Mucosa of descending colon (tissue), 3 donors: ENCODE measurements at regions of chr20 and their contacts with region 1.

Region 1: DNA sequence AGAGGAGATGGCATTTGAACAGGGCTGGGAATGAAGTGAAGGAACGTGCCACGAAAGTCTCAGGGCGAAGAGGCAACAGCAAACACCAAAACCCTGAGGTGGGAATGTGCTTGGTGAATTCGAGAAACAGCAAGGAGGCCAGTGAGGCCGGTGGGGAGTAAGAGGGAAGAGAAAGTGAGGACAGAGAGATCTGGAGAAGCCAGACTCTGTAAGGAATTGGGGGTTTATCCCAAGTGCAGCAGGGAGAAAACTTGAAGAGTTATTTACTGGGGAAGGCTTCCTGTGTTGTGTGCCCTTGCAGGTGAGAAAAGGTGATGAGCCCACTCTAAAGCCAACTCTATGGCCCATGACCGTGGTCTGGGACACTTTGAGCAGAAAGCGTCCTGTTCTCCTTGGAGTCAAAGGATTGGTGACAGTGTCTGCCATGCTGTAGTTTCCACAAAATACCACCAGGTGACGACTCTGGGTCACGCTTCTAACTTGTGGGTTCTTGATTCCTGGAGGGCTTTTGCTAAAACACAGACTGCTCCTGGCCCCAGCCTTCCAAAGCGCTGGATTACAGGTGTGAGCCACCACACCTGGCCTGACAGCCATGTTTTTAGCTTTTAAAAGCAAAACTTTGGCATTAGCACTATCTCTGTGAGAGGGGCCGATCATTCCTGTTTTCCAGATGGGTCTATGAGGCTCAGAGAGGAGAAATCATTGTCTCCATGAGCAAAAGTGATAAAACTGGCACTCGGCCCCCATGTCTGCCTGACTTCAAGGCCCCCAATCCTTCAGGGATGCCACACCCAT is 18.0 kb upstream of the CSNK2A1 start:
- DNase-seq: peak in 2 of 3 donors; percentile 45 to 72
- ATAC-seq: peak; percentile 82
- H3K4me3 ChIP-seq: no peak overlapping the region
- H3K4me1 ChIP-seq: no peaks in the 10 kb centered on the region
- CTCF ChIP-seq: peak; percentile 93

Region 2: DNA sequence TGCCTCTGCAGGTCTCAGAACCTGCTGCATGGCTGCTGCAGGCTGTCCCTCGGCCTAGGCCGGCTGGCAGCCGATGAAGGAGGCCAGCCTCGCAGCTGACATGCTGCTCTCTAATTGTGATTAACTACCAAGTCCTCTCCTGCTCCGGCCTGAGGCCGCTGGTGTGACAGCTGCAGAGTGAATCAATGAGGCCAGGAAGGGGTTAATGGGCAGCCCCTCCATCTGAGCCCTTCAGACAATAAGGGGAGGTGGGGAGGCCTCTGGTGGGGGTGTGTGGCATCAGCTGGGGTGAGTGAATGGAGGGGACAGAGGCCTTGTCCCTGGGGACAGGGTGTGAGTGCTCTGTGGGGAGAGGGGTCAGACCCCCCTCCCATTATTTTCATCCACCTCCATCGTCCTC is 172.2 kb after region 1 on chr20:
- intact Hi-C with region 1: loop called in 1 of 2 experiments (anchors 10 kb)
- DNase-seq: no peak
- ATAC-seq: no peak
- H3K4me3 ChIP-seq: no peak overlapping the region
- H3K4me1 ChIP-seq: no peaks in the 10 kb centered on the region
- CTCF ChIP-seq: no peak

Region 3: DNA sequence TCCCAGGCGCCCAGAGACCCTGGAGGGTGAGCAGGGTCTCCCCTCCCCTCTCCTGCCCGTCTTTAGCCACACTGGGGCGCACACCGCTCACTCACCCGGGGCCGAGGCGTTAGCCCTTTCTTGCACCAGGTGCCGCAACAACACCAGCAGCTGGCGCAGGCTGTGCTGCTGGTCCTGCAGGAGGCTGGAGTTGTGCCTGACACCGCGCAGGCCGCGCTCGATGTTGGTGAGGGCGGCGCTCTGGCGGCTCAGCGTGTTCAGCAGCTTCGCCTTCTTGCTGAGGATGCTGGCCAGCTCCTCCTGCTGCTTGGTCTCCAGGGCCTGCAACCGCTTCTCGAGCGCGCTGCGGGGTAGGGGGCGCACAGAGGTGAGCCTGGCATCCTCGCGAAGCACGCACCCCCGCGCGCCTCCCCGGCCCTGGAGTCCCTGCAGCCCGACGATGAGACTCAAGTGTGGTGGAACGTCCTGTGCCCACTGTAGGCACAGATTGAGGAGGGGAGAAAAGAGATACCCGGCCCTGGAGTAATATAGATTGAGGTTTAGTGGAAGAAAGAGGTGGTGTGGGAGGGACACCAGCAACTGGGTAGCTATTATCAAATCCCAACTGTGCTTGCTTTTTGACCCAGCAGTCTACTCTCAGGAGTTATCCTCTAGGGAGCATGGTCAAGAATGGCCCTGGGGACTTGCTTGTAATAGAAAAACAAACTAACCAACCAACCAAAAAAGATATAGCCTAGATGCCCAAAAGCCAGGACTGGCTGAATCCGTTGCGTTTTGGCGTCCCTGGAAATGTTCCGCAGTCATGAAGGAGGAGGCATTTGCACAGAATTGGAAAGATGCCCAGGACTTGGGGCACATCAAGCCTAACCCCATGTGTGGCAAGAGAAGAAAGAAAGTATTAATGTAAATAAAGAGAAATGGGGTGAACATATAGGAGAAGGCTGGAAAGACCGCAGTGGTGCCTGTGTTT is 323.6 kb after region 1 on chr20:
- intact Hi-C with region 1: no loop called
- DNase-seq: peak in 1 of 3 donors; percentile 5
- ATAC-seq: no peak
- H3K4me3 ChIP-seq: no peak overlapping the region
- H3K4me1 ChIP-seq: no peaks in the 10 kb centered on the region
- CTCF ChIP-seq: no peak